Activated naive CD4-positive, alpha-beta T cell treated with anti-CD3 and anti-CD28 coated beads for 36 hours (primary cell): ENCODE measurements at regions of chr18 and their contacts with region 1.

Region 1: GRCh38 chr18:32048507-32049091 is 30.0 kb downstream of the RNF125 start:
- DNase-seq: peak; percentile 30
- H3K4me3 Mint-ChIP-seq: no peak overlapping the region
- H3K27ac Mint-ChIP-seq: peak overlapping the region; percentile 81
- H3K4me1 Mint-ChIP-seq: peaks cover 23% of the 10 kb centered on the region
- H3K27me3 Mint-ChIP-seq: no peaks in the 10 kb centered on the region

Region 2: GRCh38 chr18:32072321-32072720 is 23.7 kb after region 1 on chr18:
- CTCF ChIA-PET with region 1: interaction called, 9 read pairs
- intact Hi-C with region 1: loop called (anchors 2 kb)
- DNase-seq: no peak
- H3K4me3 Mint-ChIP-seq: no peak overlapping the region
- H3K27ac Mint-ChIP-seq: no peak overlapping the region
- H3K4me1 Mint-ChIP-seq: peaks cover 8% of the 10 kb centered on the region
- H3K27me3 Mint-ChIP-seq: no peaks in the 10 kb centered on the region